ENCODE measurements at regions of chr1 and their contacts with region 1.

Region 1: DNA sequence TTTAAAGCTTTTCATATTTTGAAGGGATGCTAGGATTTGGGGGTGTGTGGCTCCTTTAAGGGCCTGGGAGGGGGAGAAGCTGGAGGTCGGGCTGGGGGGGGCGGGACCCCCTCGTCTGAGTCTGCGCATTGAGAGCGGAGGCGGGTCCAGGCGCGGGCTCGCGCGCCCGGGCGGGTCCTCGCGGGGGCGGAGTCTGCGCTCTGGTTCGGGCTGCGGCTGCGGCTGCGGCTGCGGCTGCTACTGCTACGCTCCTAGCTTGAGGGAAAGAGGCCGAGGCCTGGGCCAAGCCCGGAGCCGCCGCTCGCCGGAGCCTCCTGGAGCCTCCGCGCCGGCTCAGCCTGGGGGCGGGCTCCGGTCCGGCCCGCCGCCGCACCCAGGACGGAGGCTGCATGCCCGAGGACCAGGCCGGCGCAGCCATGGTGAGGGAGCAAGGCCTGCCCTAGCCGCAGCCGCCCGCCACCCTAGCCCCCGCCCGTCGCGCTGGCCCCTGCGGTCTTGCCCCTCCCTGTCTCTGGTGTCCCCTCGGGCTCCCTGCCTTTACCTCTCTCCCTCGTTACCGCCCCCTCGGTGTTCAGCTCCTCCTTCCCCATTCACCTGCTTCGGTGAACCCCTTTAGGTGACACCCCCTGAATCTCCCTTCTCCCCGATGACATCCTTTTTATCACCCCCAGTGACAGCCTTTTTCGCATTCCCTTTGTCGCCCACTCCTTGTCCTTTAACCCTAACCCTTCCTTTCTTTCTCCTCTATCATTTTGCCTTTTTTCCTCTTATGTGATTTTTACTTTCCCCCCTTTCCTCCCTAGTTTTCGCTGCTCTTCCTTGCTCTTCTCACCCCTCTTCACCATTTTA is at the start of gene ZYG11B:
- DNase-seq: peak; percentile 97
- H3K4me3 Mint-ChIP-seq: peak within 1 kb of the TSS; percentile 91
- H3K27ac Mint-ChIP-seq: peak within 1 kb of the TSS; percentile 80
- H3K4me1 Mint-ChIP-seq: peaks cover 30% of the 10 kb centered on the region
- H3K27me3 Mint-ChIP-seq: peaks cover 2% of the 10 kb centered on the region
- total RNA-seq, gene ZYG11B: 9.3 and 10.2 TPM in 2 replicates

Region 2: GRCh38 chr1:52621950-52622349 is 104.5 kb before region 1 on chr1:
- intact Hi-C with region 1: no loop called
- DNase-seq: no peak
- H3K4me3 Mint-ChIP-seq: no peak overlapping the region
- H3K27ac Mint-ChIP-seq: no peak overlapping the region
- H3K4me1 Mint-ChIP-seq: no peaks in the 10 kb centered on the region
- H3K27me3 Mint-ChIP-seq: no peaks in the 10 kb centered on the region

Region 3: GRCh38 chr1:52665006-52665941 is 61.2 kb before region 1 on chr1:
- intact Hi-C with region 1: no loop called
- DNase-seq: no peak
- H3K4me3 Mint-ChIP-seq: no peak overlapping the region
- H3K27ac Mint-ChIP-seq: no peak overlapping the region
- H3K4me1 Mint-ChIP-seq: peaks cover 4% of the 10 kb centered on the region
- H3K27me3 Mint-ChIP-seq: no peaks in the 10 kb centered on the region

Region 4: GRCh38 chr1:52691821-52692220 is 34.7 kb before region 1 on chr1:
- intact Hi-C with region 1: no loop called
- DNase-seq: no peak
- H3K4me3 Mint-ChIP-seq: no peak overlapping the region
- H3K27ac Mint-ChIP-seq: no peak overlapping the region
- H3K4me1 Mint-ChIP-seq: peaks cover 12% of the 10 kb centered on the region
- H3K27me3 Mint-ChIP-seq: no peaks in the 10 kb centered on the region

Region 5: GRCh38 chr1:52814443-52814842 is 88.0 kb after region 1 on chr1:
- intact Hi-C with region 1: no loop called
- DNase-seq: no peak
- H3K4me3 Mint-ChIP-seq: no peak overlapping the region
- H3K27ac Mint-ChIP-seq: no peak overlapping the region
- H3K4me1 Mint-ChIP-seq: no peaks in the 10 kb centered on the region
- H3K27me3 Mint-ChIP-seq: no peaks in the 10 kb centered on the region

Region 6: DNA sequence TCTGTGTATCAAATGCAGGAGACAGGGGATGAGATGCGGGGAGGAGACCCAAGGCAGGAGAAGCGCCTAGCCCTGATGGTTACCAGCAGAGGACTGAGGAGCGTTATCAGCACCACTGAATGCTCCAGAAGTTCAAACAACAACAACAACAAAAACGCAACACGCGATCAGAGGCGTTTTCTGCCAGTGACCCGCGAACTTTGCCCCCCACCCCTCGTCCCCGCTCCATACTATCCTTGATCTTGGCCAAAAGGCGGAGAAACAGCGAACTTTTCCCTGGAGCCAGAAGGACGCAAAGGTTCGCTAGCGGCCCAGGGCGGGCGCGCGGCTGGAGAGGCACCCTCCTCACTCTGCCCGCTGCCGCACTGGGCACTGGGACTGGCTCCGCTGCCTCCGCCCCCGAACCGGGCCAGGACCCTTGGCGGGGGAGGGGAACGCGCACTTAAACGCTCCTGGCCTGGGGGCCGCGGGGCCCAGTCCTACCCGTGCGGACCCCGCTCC is 194.4 kb after region 1 on chr1:
- intact Hi-C with region 1: loop called (anchors 2 kb)
- DNase-seq: no peak
- H3K4me3 Mint-ChIP-seq: peak overlapping the region; percentile 86
- H3K27ac Mint-ChIP-seq: peak overlapping the region; percentile 37
- H3K4me1 Mint-ChIP-seq: peaks cover 20% of the 10 kb centered on the region
- H3K27me3 Mint-ChIP-seq: peaks cover 4% of the 10 kb centered on the region

Measured in activated CD4-positive, alpha-beta T cell treated with anti-CD3 and anti-CD28 coated beads, Interleukin-2, amount 10 ng/mL, durations not matched to agents 24 days and 14 days (primary cell).